Activated naive CD8-positive, alpha-beta T cell treated with anti-CD3 and anti-CD28 coated beads, Interleukin-2, amount 10 ng/mL, durations not matched to agents 7 days and 5 days (primary cell): ENCODE measurements at regions of chr17 and their contacts with region 1.

Region 1: GRCh38 chr17:12053552-12053951 is 32.9 kb downstream of the MAP2K4 start:
- DNase-seq: no peak
- ATAC-seq: peak; percentile 19
- H3K4me3 Mint-ChIP-seq: peak overlapping the region; percentile 85
- H3K27ac Mint-ChIP-seq: peak overlapping the region; percentile 88
- H3K4me1 Mint-ChIP-seq: peaks cover 62% of the 10 kb centered on the region
- H3K27me3 Mint-ChIP-seq: no peaks in the 10 kb centered on the region

Region 2: GRCh38 chr17:12020642-12021622 is 32.6 kb before region 1 on chr17 and contains the start of gene MAP2K4:
- POLR2A ChIA-PET with region 1: interaction called, 34 read pairs
- DNase-seq: peak; percentile 99
- ATAC-seq: peak; percentile 88
- H3K4me3 Mint-ChIP-seq: peak within 1 kb of the TSS; percentile 83
- H3K27ac Mint-ChIP-seq: peak within 1 kb of the TSS; percentile 67
- H3K4me1 Mint-ChIP-seq: peaks cover 36% of the 10 kb centered on the region
- H3K27me3 Mint-ChIP-seq: no peaks in the 10 kb centered on the region
- total RNA-seq, gene MAP2K4: 44.6 to 47.1 TPM

Region 3: DNA sequence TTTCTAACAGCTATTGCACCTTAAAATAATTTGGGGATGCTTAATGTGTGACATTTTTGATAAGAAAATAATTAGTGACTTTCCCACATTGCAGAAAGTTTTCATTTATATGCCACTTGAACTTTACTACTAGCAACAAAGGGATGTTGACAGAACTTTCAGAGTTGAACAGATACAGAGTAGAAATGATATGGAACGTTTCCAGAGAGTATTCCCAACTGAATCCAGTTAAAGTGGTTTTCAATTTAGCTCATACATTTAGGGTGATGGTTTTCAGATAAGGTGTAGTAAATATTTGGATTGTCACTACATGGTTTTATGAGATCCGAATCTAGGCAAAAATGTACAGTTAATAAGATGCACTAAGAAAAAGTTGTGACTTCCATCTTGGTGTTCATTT is 15.6 kb before region 1 on chr17:
- POLR2A ChIA-PET with region 1: no interaction called
- DNase-seq: no peak
- ATAC-seq: no peak
- H3K4me3 Mint-ChIP-seq: no peak overlapping the region
- H3K27ac Mint-ChIP-seq: no peak overlapping the region
- H3K4me1 Mint-ChIP-seq: peaks cover 16% of the 10 kb centered on the region
- H3K27me3 Mint-ChIP-seq: no peaks in the 10 kb centered on the region

Region 4: DNA sequence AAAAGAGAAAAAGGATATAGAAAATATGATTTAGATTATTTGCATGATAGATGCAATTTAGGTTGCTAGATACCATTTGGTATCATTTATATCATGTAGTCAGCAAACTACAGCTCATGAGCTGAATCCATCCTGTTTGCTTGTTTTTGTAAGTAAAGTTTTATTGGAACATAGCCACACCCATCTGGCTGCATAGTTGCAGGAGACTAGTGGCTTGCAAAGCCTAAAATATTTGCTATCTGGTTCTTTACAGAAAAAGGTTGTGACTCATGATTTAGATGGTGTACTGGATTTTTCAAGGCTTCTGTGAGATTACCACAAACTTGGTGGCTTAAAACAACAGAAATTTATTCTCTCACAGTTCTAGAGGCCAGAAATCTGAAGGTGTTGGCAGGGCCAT is 17.0 kb after region 1 on chr17:
- POLR2A ChIA-PET with region 1: no interaction called
- DNase-seq: no peak
- ATAC-seq: no peak
- H3K4me3 Mint-ChIP-seq: no peak overlapping the region
- H3K27ac Mint-ChIP-seq: no peak overlapping the region
- H3K4me1 Mint-ChIP-seq: no peaks in the 10 kb centered on the region
- H3K27me3 Mint-ChIP-seq: no peaks in the 10 kb centered on the region